ENCODE measurements at regions of chr17 and their contacts with region 1.

Region 1: DNA sequence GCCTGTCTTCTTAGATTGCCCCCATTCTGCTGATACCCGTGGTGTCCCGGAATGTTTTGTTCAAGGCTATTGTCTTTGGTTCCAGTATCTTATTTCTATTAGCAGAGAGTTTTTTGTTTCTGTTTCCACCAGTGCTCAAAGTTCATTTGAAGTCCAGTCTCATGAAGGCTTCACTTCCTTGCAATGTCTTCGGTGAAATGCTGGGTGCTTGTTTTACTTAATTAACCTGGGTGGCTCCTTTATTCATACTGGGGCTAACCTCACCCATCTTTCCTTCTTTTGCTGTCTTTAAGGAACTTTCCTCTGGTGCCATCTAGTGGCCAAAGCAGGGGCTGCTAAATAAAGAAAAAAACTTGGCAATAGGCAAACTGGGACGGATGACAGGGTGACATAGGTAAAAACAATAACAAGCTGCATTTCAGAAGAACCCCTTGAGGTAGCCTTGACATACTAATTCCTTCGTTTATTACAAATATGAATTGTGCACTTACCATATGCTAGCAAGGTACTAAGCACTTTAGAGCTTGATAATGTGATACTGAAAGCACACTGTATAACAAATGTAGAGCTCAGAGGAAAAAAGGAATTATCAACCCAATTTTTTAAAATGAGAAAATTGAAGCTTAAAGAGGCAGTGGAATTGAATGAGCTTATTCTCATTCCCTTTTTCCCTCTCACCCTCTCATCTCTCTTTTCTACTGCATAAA is 2.8 kb upstream of the SMIM36 start:
- DNase-seq: peak; percentile 69
- ATAC-seq: peak; percentile 91

Region 2: GRCh38 chr17:54992797-54993639 is 521.0 kb before region 1 on chr17:
- intact Hi-C with region 1: loop called (anchors 5 kb)
- DNase-seq: no peak
- ATAC-seq: peak; percentile 60

Region 3: DNA sequence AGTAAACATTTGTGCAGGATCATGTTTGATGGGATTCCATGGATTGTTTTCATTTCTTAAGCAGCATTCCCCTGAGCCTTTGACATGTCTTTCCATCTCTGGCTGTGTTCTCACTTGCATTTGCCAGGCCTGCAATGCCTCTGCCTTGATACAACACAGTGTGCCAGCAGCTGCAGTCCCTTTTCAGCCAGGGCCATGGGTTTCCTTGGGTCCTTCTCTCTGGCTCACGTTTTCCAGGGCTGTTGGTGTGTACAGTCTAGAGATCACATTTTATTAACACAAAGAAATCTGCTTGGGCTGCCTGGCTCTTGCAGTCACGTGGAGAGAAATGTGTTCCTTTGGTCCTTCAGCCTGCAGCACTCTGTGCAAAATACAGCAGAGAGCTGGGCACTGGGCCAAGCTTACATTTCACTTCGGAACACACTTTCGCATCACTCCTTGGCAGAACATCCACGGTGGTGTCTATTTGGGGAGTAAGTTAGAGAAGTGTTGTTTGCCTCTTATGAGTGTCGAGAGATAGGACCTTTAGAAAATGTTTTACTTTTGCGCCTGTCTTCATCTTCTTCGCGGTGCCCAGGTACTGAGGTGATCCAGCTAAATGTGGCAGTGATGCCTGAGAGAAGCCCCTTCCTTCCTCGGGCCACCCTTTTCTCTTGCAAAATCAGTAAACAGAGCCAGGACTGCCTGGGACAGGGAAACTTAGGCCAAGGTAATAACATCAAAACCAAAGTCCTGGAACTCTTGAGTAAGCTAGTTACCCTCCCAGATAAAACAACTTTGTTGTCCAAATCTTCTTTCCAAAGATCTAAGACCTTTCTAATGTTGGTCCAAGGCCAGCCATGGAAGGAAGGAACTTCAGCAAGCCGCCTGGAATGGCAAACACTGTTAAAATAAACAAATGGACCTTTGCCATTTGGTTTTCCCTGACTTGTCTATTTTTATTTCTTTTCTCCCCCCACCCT is 228.4 kb before region 1 on chr17:
- intact Hi-C with region 1: no loop called
- DNase-seq: peak; percentile 94
- ATAC-seq: peak; percentile 88

Region 4: GRCh38 chr17:55356434-55357328 is 157.4 kb before region 1 on chr17:
- intact Hi-C with region 1: loop called (anchors 5 kb)
- DNase-seq: peak; percentile 59
- ATAC-seq: peak; percentile 91

Region 5: GRCh38 chr17:55416470-55417052 is 97.5 kb before region 1 on chr17:
- intact Hi-C with region 1: loop called (anchors 10 kb)
- DNase-seq: no peak
- ATAC-seq: peak; percentile 17